H1 (cell line): ENCODE measurements at regions of chrX and their contacts with region 1.

Region 1: DNA sequence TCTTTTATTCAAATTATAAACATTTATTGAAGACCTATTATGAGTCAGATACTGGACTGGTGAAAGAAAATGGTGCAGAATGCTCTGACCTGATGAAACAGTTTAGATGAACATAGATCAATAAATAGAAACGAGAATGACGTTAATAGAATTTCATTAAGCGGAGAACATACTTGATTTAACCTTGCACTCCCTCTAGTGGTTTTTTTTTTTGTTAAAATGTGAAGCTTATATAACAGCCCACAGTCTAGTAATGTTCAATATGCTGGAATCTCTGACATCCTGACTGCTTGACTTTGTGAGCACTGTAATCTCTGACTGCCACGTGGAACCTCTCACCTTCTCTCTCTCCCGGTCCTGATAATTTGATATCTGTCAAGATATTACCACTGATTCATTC is 32.3 kb downstream of the HDAC8 start:
- DNase-seq: no peak
- H3K4me3 ChIP-seq: no peak overlapping the region
- H3K27ac ChIP-seq: no peak overlapping the region
- H3K4me1 ChIP-seq: no peaks in the 10 kb centered on the region
- H3K27me3 ChIP-seq: no peaks in the 10 kb centered on the region
- CTCF ChIP-seq: peak in 2 of 3 experiments; percentile 6; a peak in 2 of 4 replicates
- EP300 ChIP-seq: no peak
- POLR2A ChIP-seq: no peak
- RAD21 ChIP-seq: peak; percentile 30 to 35

Region 2: GRCh38 chrX:72297953-72298730 is 242.2 kb before region 1 on chrX:
- CTCF ChIA-PET with region 1: interaction called, 46 read pairs
- POLR2A ChIA-PET with region 1: interaction called, 4 read pairs
- DNase-seq: no peak
- H3K4me3 ChIP-seq: no peak overlapping the region
- H3K27ac ChIP-seq: no peak overlapping the region
- H3K4me1 ChIP-seq: no peaks in the 10 kb centered on the region
- H3K27me3 ChIP-seq: peaks cover 6 to 10% (median 9%) of the 10 kb centered on the region in 4 experiments
- CTCF ChIP-seq: peak in 2 of 3 experiments; percentile 65 to 74; a peak in 3 of 4 replicates
- EP300 ChIP-seq: no peak
- POLR2A ChIP-seq: no peak
- RAD21 ChIP-seq: peak; percentile 83 to 87

Region 3: GRCh38 chrX:72477781-72478181 is 62.5 kb before region 1 on chrX:
- CTCF ChIA-PET with region 1: no interaction called
- POLR2A ChIA-PET with region 1: no interaction called
- DNase-seq: no peak
- H3K4me3 ChIP-seq: no peak overlapping the region
- H3K27ac ChIP-seq: no peak overlapping the region
- H3K4me1 ChIP-seq: peaks cover 0 to 3% (median 1%) of the 10 kb centered on the region in 4 experiments; a peak in 3 of 7 replicates
- H3K27me3 ChIP-seq: no peaks in the 10 kb centered on the region
- CTCF ChIP-seq: no peak
- EP300 ChIP-seq: no peak
- POLR2A ChIP-seq: no peak
- RAD21 ChIP-seq: no peak